ENCODE measurements at regions of chr1 and their contacts with region 1.

Region 1: DNA sequence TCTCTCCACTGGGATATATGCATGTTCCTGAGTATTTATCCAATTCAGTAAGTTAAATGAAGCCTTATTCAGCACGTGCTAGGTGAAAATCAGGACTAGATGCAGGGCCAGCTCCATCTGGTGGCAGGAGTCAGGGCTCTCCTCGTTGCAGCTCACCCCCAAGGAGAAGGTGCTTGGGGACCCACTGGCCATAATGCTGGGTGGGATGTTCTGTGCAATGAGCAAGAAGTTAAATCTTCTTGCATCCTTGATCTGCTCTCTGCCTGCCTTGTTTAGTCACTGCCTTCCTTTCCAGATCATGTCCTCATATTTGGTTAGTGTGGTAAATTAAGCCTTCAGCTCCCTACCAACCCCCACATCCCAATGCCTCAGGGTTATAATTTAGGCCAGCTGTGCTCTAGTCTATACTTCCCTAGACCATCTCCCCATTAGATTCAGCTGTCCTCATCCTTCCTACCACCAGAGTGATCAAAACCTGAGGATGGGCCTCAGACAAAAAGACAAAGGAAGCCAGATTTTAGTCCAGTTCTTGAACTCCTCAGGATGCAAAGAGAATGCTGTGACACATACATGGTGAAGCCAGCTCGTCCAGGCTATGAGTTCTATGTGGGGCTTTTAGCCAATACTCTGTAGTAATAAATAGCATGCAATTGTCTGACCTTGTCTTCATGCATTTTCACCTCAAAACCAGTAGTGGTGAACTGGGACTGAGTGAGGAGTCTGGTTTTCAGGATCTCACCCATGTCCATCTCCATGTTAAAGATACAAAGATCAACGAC is 55.9 kb downstream of the SEC16B start:
- DNase-seq: no peak
- ATAC-seq: 0 out of 2 replicates have a peak, but pooled peaks have one; percentile 48
- H3K4me3 ChIP-seq: no peak overlapping the region
- H3K27ac ChIP-seq: no peak overlapping the region
- H3K4me1 ChIP-seq: no peaks in the 10 kb centered on the region
- H3K27me3 ChIP-seq: peaks cover under 1% of the 10 kb centered on the region
- CTCF ChIP-seq: peak; percentile 68

Region 2: GRCh38 chr1:177568622-177569021 is 345.3 kb before region 1 on chr1:
- CTCF ChIA-PET with region 1: interaction called, 10 read pairs
- POLR2A ChIA-PET with region 1: no interaction called
- in situ Hi-C with region 1: no loop called
- intact Hi-C with region 1: no loop called
- DNase-seq: no peak
- ATAC-seq: no peak
- H3K4me3 ChIP-seq: no peak overlapping the region
- H3K27ac ChIP-seq: no peak overlapping the region
- H3K4me1 ChIP-seq: no peaks in the 10 kb centered on the region
- H3K27me3 ChIP-seq: no peaks in the 10 kb centered on the region
- CTCF ChIP-seq: peak; percentile 20

Measured in Panc1 (cell line).